Sigmoid colon (tissue), 7 donors: ENCODE measurements at regions of chr15 and their contacts with region 1.

Region 1: DNA sequence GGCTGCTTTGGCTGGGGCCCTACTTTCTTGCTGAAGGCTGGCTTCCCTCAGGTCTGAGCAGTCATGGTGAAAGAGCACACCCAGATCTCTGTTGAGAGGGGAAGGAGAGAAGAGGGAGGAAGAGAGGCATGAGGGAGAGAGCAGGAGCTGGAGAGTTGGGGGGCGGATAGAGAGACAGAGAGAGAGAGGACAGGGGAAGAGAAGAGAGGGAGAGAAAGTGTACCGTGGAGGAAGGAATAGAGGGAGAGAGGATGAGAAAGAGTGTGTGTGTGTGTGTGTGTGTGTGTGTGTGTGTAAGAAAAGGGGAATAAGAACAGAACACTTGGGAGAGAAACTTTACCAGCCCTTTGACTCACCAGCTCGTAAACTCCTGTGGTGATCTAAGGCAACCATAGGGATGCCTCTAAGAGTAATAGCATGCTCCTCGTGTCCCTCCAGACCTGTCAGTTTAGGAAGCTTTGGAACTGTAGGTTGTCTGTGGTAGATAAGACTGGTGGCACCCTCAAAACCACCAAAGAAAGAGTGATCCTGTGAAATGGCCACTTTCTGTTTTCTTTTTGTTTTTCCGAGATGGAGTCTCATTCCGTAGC is 18.1 kb downstream of the ZNF592 start:
- DNase-seq: no peak
- H3K4me3 ChIP-seq: no peak overlapping the region
- H3K27ac ChIP-seq: no peak overlapping the region
- H3K4me1 ChIP-seq: peaks cover 0 to 29% (median 23%) of the 10 kb centered on the region in 4 donors
- H3K27me3 ChIP-seq: no peaks in the 10 kb centered on the region
- CTCF ChIP-seq: no peak
- EP300 ChIP-seq: no peak
- POLR2A ChIP-seq: no peak

Region 2: GRCh38 chr15:84807228-84807627 is 40.7 kb after region 1 on chr15:
- intact Hi-C with region 1: loop called (anchors 5 kb)
- DNase-seq: no peak
- H3K4me3 ChIP-seq: no peak overlapping the region
- H3K27ac ChIP-seq: no peak overlapping the region
- H3K4me1 ChIP-seq: no peaks in the 10 kb centered on the region
- H3K27me3 ChIP-seq: no peaks in the 10 kb centered on the region
- CTCF ChIP-seq: no peak
- EP300 ChIP-seq: no peak
- POLR2A ChIP-seq: no peak